ENCODE measurements at regions of chr6 and their contacts with region 1.

Region 1: DNA sequence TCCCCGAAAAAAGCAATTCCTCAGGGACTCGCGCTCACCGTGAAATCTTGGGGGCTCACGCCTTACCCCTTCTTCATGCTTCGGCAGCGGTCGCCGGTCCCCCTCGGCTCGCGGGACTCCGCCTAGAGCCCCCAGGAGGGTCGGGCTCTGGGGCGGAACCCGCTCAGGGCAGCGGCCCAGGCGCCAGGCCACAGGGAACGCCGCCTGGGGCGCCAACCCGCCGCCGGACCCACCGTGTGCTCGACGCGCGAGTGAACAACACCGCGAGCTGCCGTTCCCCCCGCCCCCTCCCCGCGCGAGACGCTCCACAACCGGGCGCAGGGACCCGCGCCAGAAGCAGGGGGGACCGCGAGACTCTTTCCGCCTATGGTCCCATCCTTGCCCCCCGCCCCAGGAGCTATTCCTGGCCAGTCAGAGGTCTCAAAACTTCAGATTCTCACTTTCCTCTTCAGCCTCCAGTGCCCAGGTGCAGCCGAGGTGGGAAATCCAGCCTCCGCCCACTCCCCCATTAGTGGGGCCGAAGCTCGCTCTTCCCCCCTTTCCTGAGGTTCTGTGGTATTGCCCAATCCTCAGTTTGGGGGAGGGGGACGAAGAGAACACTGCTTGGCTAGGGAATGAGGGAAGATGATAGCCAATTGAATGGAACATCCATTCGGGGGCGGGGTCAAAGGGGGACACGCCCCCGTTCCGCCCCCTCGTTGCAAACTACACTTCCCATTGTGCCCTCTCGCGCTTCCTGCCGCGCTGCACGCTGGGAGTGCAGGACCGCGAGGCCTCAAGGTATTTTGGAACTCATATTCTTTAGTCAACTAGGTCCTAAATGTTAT is at the start of gene WASF1:
- DNase-seq: peak; percentile 93
- H3K4me3 Mint-ChIP-seq: no peak within 1 kb of the TSS
- H3K27ac Mint-ChIP-seq: peak within 1 kb of the TSS; percentile 33
- H3K4me1 Mint-ChIP-seq: peaks cover 5% of the 10 kb centered on the region
- H3K27me3 Mint-ChIP-seq: peaks cover 7% of the 10 kb centered on the region
- total RNA-seq, gene WASF1: 1.3 to 1.5 TPM

Region 2: DNA sequence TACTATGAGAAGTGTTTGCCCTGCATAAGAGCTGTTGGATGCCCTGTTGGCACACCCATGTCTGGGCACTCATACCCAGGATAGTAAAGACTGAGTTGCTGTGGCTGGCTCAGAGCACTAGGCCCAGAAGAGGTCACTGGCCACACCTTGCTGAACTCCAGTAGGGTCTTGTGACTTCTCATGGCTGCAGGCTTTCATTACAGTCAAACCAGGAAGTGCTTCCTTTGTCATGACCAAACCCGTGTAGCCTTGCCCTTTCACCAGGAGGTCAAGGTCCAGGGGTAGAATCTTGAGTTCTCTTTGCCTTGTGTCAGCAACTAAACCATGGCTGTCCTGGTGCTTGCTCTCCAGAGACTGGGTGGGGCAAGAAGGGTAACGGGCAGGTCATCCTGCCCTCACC is 846.9 kb before region 1 on chr6:
- CTCF ChIA-PET with region 1: no interaction called
- intact Hi-C with region 1: no loop called
- DNase-seq: no peak
- H3K4me3 Mint-ChIP-seq: no peak overlapping the region
- H3K27ac Mint-ChIP-seq: no peak overlapping the region
- H3K4me1 Mint-ChIP-seq: peaks cover 2% of the 10 kb centered on the region
- H3K27me3 Mint-ChIP-seq: no peaks in the 10 kb centered on the region

Region 3: DNA sequence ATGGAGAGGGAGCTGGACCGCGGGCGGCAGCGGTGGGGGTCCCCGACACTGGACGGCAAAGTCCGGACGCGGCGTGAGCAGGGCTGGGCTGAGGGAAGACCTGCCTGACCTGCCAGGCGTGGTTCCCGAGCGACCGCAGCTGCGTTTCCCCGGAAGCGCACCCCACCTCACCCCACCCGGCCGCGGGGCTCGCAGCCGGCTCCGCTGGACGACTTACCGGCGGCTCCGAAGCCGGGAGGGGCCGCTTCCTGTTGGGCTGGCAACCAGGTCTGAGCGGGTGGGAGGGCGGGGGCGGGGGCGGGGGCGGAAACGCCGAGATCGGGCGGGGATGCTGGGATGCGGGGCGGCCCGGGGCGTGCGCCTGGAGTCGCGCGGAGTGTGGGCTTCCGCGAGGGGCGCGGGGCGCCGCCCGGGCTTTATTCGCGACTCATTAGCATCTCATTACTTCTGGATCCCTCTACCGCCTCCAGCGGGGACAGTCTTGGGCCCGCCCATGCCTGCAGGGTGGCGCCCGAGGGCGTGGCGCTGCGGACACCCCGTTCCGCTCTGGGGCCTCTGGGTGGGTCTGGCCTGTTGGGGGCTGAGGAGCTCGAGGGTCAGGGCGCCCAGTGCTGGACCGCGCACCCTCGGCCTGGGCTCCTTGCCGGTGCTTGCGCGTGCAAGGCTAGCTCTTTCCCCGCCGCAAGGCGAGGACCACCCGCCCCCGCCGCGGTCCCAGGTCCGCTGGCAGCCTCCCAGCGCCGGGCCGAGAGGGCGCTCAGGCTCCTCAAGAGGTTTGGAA is 723.9 kb before region 1 on chr6 and contains the start of gene MICAL1:
- CTCF ChIA-PET with region 1: no interaction called
- intact Hi-C with region 1: loop called (anchors 10 kb)
- DNase-seq: peak; percentile 69
- H3K4me3 Mint-ChIP-seq: peak within 1 kb of the TSS; percentile 91
- H3K27ac Mint-ChIP-seq: peak within 1 kb of the TSS; percentile 82
- H3K4me1 Mint-ChIP-seq: peaks cover 54% of the 10 kb centered on the region
- H3K27me3 Mint-ChIP-seq: no peaks in the 10 kb centered on the region
- total RNA-seq, gene MICAL1: 20.4 to 22.9 TPM

Region 4: GRCh38 chr6:109690737-109691621 is 488.6 kb before region 1 on chr6 and contains the starts of genes AK9 and FIG4:
- CTCF ChIA-PET with region 1: no interaction called
- intact Hi-C with region 1: loop called (anchors 1 kb)
- DNase-seq: peak; percentile 94
- H3K4me3 Mint-ChIP-seq: peak within 1 kb of the TSS; percentile 83
- H3K27ac Mint-ChIP-seq: peak within 1 kb of the TSS; percentile 81
- H3K4me1 Mint-ChIP-seq: peaks cover 26% of the 10 kb centered on the region
- H3K27me3 Mint-ChIP-seq: no peaks in the 10 kb centered on the region
- total RNA-seq, gene AK9: 1.7 TPM
- total RNA-seq, gene FIG4: 14.0 to 16.4 TPM

Region 5: DNA sequence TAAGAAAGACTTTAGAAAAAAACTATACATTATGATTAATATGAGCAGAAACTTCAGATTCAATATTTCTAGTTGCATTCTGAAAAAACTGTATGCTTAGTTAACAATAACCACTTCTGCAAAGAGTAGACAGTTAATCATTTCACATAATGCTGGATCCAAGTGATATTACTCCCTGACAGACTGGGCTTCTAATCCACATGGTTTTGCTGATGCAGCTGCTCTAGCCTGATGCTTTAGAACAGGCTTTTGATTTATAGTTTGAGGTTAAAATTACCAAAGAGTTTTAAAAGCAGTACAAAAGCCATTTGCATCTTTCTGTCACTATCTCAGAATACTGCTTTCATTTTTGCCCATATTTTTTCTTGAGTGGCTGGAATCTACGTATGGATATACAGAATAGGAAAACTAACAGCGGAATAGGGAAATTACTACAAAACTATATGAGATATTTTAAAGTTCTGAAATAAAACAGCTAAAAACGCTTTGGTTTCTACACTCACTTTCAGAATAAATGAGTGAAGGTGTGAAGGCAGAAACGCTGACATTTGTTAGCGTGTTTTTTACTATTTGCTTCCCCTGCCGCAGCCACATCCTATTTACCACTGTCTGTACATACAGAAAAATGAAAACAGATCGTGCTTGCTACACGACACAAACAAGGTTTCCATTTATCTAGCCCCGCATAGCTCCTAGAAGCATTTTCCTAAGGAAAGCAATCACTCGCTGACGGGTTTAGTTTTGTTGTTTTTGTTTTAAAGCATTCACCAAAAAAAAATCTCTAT is 116.8 kb after region 1 on chr6:
- CTCF ChIA-PET with region 1: no interaction called
- intact Hi-C with region 1: loop called (anchors 5 kb)
- DNase-seq: peak; percentile 16
- H3K4me3 Mint-ChIP-seq: no peak overlapping the region
- H3K27ac Mint-ChIP-seq: no peak overlapping the region
- H3K4me1 Mint-ChIP-seq: peaks cover 8% of the 10 kb centered on the region
- H3K27me3 Mint-ChIP-seq: peaks cover 17% of the 10 kb centered on the region

Region 6: DNA sequence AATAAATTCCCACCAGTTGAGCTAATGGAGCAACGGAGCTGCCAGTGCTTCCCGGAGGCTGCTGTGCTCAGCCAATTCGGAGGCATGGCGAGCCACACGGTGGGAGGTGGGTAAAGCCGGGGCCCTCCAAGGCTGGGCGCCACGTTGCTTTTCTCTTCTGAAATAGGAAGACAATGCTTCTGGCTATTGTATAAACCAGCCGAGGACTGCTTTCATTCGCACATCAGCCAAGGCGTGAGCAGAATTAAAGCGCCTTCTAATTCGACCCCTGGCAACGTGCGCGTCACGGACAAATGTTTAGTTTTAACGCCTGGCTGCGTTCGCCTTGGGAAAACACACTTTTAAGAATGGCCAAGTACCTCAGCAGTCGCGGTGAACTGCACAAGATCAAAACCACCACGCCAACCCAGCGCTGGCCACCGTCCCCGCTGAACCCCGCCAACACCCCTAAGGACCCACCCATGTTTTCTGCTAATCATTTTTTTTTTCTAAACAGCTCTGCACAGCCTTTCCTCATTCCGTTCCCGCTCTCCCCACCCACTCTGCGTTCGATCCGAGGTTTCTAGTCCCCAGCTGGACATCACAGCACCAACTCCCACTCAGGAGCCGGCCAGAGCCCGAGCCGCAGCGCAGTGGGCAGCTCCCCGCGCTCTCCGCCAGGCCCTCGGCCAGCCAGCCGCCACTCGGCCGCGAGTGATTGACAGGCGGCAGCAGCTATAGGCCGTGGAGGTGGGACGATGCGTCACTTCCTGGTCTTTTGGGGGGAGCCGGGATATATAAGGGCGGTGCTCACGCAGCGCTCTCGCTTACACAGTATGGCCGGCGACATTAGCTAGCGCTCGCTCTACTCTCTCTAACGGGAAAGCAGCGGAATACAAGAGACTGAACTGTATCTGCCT is 694.6 kb after region 1 on chr6 and contains the start of gene AMD1:
- CTCF ChIA-PET with region 1: no interaction called
- intact Hi-C with region 1: loop called (anchors 1 kb)
- DNase-seq: peak; percentile 94
- H3K4me3 Mint-ChIP-seq: peak within 1 kb of the TSS; percentile 95
- H3K27ac Mint-ChIP-seq: peak within 1 kb of the TSS; percentile 95
- H3K4me1 Mint-ChIP-seq: peaks cover 29% of the 10 kb centered on the region
- H3K27me3 Mint-ChIP-seq: no peaks in the 10 kb centered on the region
- total RNA-seq, gene AMD1: 72.6 to 75.3 TPM

Region 7: GRCh38 chr6:110981202-110981600 is 801.6 kb after region 1 on chr6:
- CTCF ChIA-PET with region 1: no interaction called
- intact Hi-C with region 1: loop called (anchors 1 kb)
- DNase-seq: no peak
- H3K4me3 Mint-ChIP-seq: peak overlapping the region; percentile 96
- H3K27ac Mint-ChIP-seq: peak overlapping the region; percentile 96
- H3K4me1 Mint-ChIP-seq: peaks cover 38% of the 10 kb centered on the region
- H3K27me3 Mint-ChIP-seq: no peaks in the 10 kb centered on the region